Activated T-helper 2 cell treated with anti-CD3 and anti-CD28 coated beads, Interferon-gamma antibody, Interleukin-2, Interleukin-4, amounts not matched to agents 10 μg/mL and 5 μg/mL and 100 μg/mL, durations not matched to agents 14 hours and 24 hours and 36 hours (primary cell): ENCODE measurements at regions of chr22 and their contacts with region 1.

Region 1: DNA sequence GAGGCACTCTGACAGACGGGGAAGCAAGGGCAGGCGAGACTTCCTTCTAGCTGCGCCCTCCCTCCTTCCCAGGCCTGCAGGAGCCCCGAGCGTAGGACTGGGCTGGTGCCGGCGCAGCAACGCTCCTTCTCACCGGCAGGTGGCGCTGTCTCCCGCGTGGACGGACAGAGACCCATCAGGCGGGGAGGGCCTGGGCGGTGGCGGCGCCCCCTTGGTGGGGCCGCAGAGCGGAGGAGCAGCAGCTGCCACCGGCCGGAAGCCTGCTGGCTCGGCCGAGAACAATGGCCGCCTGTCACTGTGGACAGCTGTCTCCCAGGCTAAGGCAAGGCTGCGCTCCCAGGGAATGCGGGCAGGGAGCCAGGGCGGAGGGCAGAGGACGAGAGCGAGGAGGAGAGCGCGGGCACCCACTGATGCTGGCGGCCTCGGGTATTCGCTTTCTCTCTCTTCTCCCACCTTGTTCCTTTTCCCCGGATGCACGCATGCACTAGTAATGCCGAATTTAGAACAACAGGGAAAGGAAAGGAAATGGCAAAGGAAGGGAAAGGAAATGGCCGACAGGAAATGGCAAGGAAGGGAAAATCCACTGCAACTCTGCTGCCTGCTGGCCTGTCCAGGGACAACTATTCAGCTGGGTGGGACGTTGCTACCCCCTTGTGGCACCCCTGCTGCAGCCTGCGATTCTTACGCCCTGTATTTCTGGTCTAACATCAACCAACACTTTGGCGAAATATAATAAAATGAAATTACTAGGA is 14.4 kb downstream of the PPM1F start:
- DNase-seq: peak; percentile 86
- H3K4me3 Mint-ChIP-seq: peak overlapping the region; percentile 78
- H3K27ac Mint-ChIP-seq: peak overlapping the region; percentile 70
- H3K4me1 Mint-ChIP-seq: peaks cover 38% of the 10 kb centered on the region
- H3K27me3 Mint-ChIP-seq: no peaks in the 10 kb centered on the region

Region 2: DNA sequence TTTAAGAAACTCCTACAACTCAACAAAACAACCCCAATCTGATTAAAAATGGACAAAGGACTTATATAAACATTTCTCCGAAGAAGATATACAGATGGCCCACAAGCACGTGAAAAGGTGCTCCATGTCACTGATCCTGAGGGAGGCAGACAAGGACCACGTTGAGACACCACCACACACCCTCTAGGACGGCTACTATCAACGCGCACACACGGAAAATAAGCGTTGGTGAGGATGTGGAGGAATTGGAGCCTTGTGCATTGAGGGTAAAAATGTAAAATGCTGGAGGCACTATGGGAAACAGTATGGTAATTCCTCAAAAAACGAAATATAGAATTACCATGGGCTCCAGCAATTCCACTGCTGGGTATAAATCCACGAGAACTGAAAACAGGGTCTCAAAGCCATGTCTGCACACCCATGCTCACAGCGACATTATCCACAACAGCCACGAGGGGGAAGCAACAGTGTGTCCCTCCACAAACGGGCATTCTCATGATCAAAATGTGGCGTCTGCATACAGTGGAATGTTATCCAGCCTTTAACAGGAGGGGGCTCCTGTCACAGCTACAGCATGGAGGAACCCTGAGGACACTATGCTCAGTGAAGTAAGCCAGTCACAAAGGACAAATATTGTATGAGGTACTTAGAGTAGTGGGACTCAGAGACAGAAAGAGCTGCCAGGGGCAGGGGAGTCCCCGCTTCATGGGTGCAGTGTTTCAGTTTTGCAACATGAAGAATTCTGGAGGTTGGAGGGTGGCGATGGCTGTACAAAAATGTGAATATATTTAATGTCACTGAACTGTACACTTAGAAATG is 225.1 kb before region 1 on chr22:
- intact Hi-C with region 1: loop called (anchors 2 kb)
- DNase-seq: peak; percentile 33
- H3K4me3 Mint-ChIP-seq: no peak overlapping the region
- H3K27ac Mint-ChIP-seq: no peak overlapping the region
- H3K4me1 Mint-ChIP-seq: peaks cover 3% of the 10 kb centered on the region
- H3K27me3 Mint-ChIP-seq: peaks cover 3% of the 10 kb centered on the region

Region 3: GRCh38 chr22:21816787-21817496 is 121.3 kb before region 1 on chr22:
- intact Hi-C with region 1: no loop called
- DNase-seq: peak; percentile 24
- H3K4me3 Mint-ChIP-seq: peak overlapping the region; percentile 68
- H3K27ac Mint-ChIP-seq: peak overlapping the region; percentile 88
- H3K4me1 Mint-ChIP-seq: peaks cover 54% of the 10 kb centered on the region
- H3K27me3 Mint-ChIP-seq: no peaks in the 10 kb centered on the region

Region 4: GRCh38 chr22:21867528-21868266 is 70.5 kb before region 1 on chr22 and contains the start of gene MAPK1:
- intact Hi-C with region 1: no loop called
- DNase-seq: peak; percentile 92
- H3K4me3 Mint-ChIP-seq: peak within 1 kb of the TSS; percentile 96
- H3K27ac Mint-ChIP-seq: peak within 1 kb of the TSS; percentile 98
- H3K4me1 Mint-ChIP-seq: peaks cover 31% of the 10 kb centered on the region
- H3K27me3 Mint-ChIP-seq: peaks cover 13% of the 10 kb centered on the region
- total RNA-seq, gene MAPK1: 150 and 153 TPM in 2 replicates

Region 5: GRCh38 chr22:21952586-21953571 is 14.6 kb after region 1 on chr22 and contains the start of gene PPM1F:
- intact Hi-C with region 1: loop called (anchors 2 kb)
- DNase-seq: peak; percentile 83
- H3K4me3 Mint-ChIP-seq: peak within 1 kb of the TSS; percentile 83
- H3K27ac Mint-ChIP-seq: peak within 1 kb of the TSS; percentile 65
- H3K4me1 Mint-ChIP-seq: peaks cover 8% of the 10 kb centered on the region
- H3K27me3 Mint-ChIP-seq: no peaks in the 10 kb centered on the region
- total RNA-seq, gene PPM1F: 26.4 and 31.4 TPM in 2 replicates